Activated naive CD4-positive, alpha-beta T cell treated with anti-CD3 and anti-CD28 coated beads, Interleukin-2, amount 10 ng/mL, durations not matched to agents 7 days and 5 days (primary cell): ENCODE measurements at regions of chr1 and their contacts with region 1.

Region 1: GRCh38 chr1:155250633-155251449 is 4.4 kb downstream of the ENTREP3 start:
- DNase-seq: peak; percentile 98
- H3K4me3 Mint-ChIP-seq: peak overlapping the region; percentile 60
- H3K27ac Mint-ChIP-seq: peak overlapping the region; percentile 78
- H3K4me1 Mint-ChIP-seq: peaks cover 42% of the 10 kb centered on the region
- H3K27me3 Mint-ChIP-seq: no peaks in the 10 kb centered on the region

Region 2: GRCh38 chr1:155227261-155228095 is 23.4 kb before region 1 on chr1:
- CTCF ChIA-PET with region 1: interaction called, 15 read pairs
- DNase-seq: peak; percentile 100
- H3K4me3 Mint-ChIP-seq: peak overlapping the region; percentile 88
- H3K27ac Mint-ChIP-seq: peak overlapping the region; percentile 90
- H3K4me1 Mint-ChIP-seq: peaks cover 38% of the 10 kb centered on the region
- H3K27me3 Mint-ChIP-seq: peaks cover 4% of the 10 kb centered on the region

Region 3: DNA sequence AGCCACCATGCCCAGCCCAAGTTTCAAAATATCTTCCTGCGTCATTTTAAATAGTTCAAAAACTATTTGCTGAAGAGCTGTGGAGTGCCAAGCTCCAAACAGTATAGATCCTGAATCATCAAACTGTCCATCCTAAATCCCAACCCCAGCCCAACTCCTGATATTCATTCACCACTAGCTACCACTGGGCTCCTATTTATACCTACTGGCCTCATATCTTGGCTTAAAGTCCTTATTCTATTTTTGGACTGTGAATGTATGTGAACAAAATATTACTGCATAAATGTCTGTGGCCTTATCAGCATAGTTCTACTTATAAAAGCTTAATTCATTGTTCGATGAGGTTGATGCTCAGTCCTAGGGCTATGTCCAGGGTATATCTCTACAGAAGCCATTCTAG is 16.5 kb after region 1 on chr1:
- CTCF ChIA-PET with region 1: interaction called, 57 read pairs
- DNase-seq: no peak
- H3K4me3 Mint-ChIP-seq: no peak overlapping the region
- H3K27ac Mint-ChIP-seq: no peak overlapping the region
- H3K4me1 Mint-ChIP-seq: peaks cover 43% of the 10 kb centered on the region
- H3K27me3 Mint-ChIP-seq: no peaks in the 10 kb centered on the region

Region 4: DNA sequence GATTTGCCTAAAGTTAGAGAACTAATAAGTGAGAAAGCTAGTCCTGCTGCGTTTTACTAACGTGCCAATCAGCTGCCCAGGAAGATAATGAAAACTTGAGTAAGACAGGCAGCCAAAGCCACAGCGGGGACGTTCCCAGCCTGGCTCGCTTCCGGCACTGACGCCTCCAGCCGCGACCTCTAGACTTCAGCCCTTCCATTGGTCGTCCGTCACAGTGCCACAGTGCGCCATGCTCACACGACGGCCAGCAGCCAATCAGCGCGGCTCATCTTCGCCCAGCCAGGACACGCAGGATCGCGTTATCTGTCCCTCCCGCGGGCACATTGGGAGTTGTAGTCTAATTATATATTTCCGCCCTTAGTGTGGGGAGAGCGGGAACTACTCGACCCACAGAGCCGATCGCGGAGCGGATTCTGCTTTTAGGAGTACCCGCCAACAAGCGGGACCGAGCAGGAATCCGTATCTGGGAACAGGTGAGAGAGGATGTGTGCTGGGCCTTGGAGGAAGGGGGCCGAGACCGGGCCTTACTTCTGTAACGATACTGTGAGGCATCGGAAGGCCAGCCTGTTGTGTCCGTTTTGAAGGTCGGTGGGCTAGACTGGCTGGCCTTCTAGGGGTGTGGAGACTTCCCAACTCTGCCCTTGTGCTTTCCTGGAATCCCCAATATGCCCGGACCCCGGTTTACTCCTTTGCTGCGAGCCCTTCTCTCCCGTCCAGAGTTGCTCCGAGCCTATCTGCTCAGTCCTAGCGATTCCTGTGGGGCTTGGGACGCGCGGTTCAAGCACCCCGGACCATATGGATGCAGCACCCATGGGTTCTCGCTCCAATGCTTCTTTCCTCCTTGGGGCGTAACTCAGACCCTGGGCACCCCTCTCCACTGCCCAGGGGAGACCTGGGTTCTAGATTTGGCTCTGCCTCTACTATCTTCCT is 57.9 kb after region 1 on chr1 and contains the start of gene FDPS:
- CTCF ChIA-PET with region 1: interaction called, 39 read pairs
- DNase-seq: peak; percentile 99
- H3K4me3 Mint-ChIP-seq: peak within 1 kb of the TSS; percentile 91
- H3K27ac Mint-ChIP-seq: peak within 1 kb of the TSS; percentile 95
- H3K4me1 Mint-ChIP-seq: peaks cover 45% of the 10 kb centered on the region
- H3K27me3 Mint-ChIP-seq: peaks cover 13% of the 10 kb centered on the region

Region 5: DNA sequence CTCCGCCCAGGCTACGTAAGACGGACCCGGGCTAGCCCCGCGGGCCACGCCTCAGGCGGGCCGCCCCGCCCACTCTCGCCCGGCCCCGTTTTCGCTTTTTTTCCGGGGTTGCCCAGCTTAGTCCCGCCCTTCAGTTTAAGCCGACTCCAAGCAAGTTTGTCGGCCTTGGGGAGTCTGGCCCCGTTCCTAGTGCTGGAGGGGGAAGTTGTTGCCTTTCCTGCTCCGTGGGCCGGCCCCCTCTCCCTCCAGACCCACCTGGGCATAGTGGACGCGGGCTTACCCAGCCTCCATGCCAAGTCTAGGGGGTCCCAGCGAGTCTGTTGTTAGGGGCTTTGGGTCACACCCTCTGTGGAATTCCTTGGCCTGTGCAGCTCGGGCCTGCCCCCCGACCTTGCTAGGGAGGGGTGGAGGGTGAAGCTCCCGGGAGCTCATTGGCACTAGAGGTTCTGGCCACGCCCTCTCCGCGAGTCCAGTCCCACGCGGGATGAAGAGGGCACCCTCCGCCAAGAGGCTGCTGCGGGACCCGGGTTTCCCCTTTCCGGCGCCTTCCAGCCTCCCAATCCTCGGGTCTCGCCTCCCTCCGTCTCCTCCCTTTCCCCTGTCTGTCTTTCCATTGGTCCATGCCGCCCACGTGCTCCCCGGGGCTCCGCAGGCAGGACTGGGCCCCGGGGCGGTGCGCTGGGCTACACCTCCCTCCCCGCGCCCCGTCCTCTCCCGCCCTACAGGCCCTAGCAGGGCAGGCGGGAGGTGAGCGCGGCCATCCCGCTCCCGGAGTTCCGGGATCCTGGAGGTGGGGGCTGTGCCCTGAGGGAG is 73.2 kb after region 1 on chr1:
- CTCF ChIA-PET with region 1: interaction called, 138 read pairs
- DNase-seq: peak; percentile 95
- H3K4me3 Mint-ChIP-seq: peak overlapping the region; percentile 87
- H3K27ac Mint-ChIP-seq: peak overlapping the region; percentile 79
- H3K4me1 Mint-ChIP-seq: peaks cover 59% of the 10 kb centered on the region
- H3K27me3 Mint-ChIP-seq: no peaks in the 10 kb centered on the region

Region 6: DNA sequence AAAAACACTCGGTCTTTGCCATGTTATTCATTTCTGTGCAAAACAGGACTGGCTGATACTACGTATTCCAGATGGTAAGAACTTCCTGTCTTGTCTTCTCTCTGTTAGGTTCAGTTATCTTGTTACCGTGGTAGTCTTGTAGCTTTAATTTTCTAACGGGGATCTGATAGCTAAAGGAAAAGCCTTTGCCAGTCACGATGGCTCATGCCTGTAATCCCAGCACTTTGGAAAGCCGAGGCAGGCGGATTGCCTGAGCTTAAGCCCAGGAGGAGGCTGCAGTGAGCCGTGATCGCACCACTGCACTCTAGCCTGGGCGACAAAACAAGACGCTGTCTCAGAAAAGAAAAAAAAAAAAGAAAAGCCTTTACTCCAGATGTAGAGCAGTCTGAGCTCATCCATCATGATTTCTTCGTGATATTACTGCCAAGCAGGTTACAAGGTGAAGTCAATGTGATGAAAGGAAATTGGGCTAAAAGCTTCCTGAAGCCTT is 348.0 kb after region 1 on chr1:
- CTCF ChIA-PET with region 1: interaction called, 32 read pairs
- DNase-seq: peak; percentile 26
- H3K4me3 Mint-ChIP-seq: peak overlapping the region; percentile 56
- H3K27ac Mint-ChIP-seq: peak overlapping the region; percentile 81
- H3K4me1 Mint-ChIP-seq: peaks cover 11% of the 10 kb centered on the region
- H3K27me3 Mint-ChIP-seq: no peaks in the 10 kb centered on the region